Mucosa of descending colon (tissue), 3 donors: ENCODE measurements at regions of chr6 and their contacts with region 1.

Region 1: GRCh38 chr6:106300944-106301343 is 24.6 kb downstream of the ATG5 start:
- DNase-seq: peak in 1 of 3 donors; percentile 14
- ATAC-seq: peak; percentile 67
- H3K4me3 ChIP-seq: no peak overlapping the region
- H3K4me1 ChIP-seq: no peaks in the 10 kb centered on the region
- CTCF ChIP-seq: no peak

Region 2: GRCh38 chr6:105733565-105734162 is 567.3 kb before region 1 on chr6:
- intact Hi-C with region 1: loop called in 1 of 2 experiments (anchors 10 kb)
- DNase-seq: peak in 1 of 3 donors; percentile 26
- ATAC-seq: no peak
- H3K4me3 ChIP-seq: no peak overlapping the region
- H3K4me1 ChIP-seq: no peaks in the 10 kb centered on the region
- CTCF ChIP-seq: peak; percentile 41

Region 3: GRCh38 chr6:106477790-106478189 is 176.8 kb after region 1 on chr6:
- intact Hi-C with region 1: no loop called
- DNase-seq: no peak
- ATAC-seq: no peak
- H3K4me3 ChIP-seq: no peak overlapping the region
- H3K4me1 ChIP-seq: no peaks in the 10 kb centered on the region
- CTCF ChIP-seq: no peak